Activated CD4-positive, alpha-beta T cell treated with anti-CD3 and anti-CD28 coated beads, Interleukin-2, amount 10 ng/mL, durations not matched to agents 24 days and 14 days (primary cell): ENCODE measurements at regions of chr12 and their contacts with region 1.

Region 1: GRCh38 chr12:122336015-122336946 is 70.0 kb upstream of the VPS33A start:
- DNase-seq: peak; percentile 77
- H3K4me3 Mint-ChIP-seq: no peak overlapping the region
- H3K27ac Mint-ChIP-seq: peak overlapping the region; percentile 63
- H3K4me1 Mint-ChIP-seq: peaks cover 12% of the 10 kb centered on the region
- H3K27me3 Mint-ChIP-seq: no peaks in the 10 kb centered on the region

Region 2: GRCh38 chr12:122356192-122356635 is 19.9 kb after region 1 on chr12:
- intact Hi-C with region 1: loop called (anchors 2 kb)
- DNase-seq: peak; percentile 88
- H3K4me3 Mint-ChIP-seq: no peak overlapping the region
- H3K27ac Mint-ChIP-seq: no peak overlapping the region
- H3K4me1 Mint-ChIP-seq: peaks cover 9% of the 10 kb centered on the region
- H3K27me3 Mint-ChIP-seq: no peaks in the 10 kb centered on the region

Region 3: GRCh38 chr12:122830541-122831214 is 494.4 kb after region 1 on chr12:
- intact Hi-C with region 1: no loop called
- DNase-seq: no peak
- H3K4me3 Mint-ChIP-seq: no peak overlapping the region
- H3K27ac Mint-ChIP-seq: no peak overlapping the region
- H3K4me1 Mint-ChIP-seq: peaks cover 9% of the 10 kb centered on the region
- H3K27me3 Mint-ChIP-seq: peaks cover 38% of the 10 kb centered on the region

Region 4: DNA sequence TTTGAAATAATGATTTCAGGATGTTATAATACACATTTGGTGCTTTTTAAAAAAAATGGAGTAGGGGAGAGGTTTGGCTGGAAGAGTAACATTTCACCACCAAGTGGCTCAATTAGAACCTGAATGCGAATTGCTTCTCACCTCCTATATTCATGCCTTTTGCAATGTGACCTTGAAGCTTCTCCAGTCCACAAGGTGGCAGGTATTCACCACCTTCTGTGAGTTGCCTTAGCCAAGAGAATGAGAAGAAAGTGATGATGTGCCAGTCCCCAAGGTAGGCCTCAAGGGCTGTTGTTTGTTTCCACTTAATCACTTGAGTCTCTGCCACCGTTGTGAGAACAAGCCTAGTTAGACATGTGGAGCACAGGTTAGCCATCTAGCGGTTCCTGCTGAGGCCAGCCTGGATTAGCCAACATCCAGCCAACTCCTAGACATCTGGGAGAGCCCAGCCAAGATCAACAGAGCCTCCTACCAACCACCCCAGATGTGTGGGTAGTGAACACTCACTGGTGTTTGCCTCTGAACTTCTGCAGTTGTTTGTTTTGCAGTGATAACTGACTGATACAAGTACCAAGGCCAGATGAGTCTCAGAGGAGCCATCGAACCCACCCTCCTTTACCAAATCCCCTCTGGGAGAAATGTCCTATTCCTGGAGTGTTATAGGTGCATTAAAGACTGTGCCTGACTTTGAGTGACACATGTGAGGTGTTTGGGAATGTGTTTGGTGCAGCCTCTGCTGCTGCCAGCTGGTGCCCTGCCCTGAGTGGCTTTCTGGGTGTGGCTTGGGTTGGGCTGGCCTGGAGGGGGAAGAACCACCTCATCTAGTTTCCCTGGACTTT is 1826.1 kb after region 1 on chr12:
- intact Hi-C with region 1: no loop called
- DNase-seq: peak; percentile 58
- H3K4me3 Mint-ChIP-seq: no peak overlapping the region
- H3K27ac Mint-ChIP-seq: no peak overlapping the region
- H3K4me1 Mint-ChIP-seq: no peaks in the 10 kb centered on the region
- H3K27me3 Mint-ChIP-seq: no peaks in the 10 kb centered on the region